ENCODE measurements at regions of chr3 and their contacts with region 1.

Region 1: GRCh38 chr3:48188266-48189201 is at the start of gene CDC25A:
- DNase-seq: peak; percentile 95
- H3K4me3 Mint-ChIP-seq: peak within 1 kb of the TSS; percentile 96
- H3K27ac Mint-ChIP-seq: peak within 1 kb of the TSS; percentile 92
- H3K4me1 Mint-ChIP-seq: peaks cover 35% of the 10 kb centered on the region
- H3K27me3 Mint-ChIP-seq: peaks cover 6% of the 10 kb centered on the region
- total RNA-seq, gene CDC25A: 50.9 and 52.6 TPM in 2 replicates

Region 2: DNA sequence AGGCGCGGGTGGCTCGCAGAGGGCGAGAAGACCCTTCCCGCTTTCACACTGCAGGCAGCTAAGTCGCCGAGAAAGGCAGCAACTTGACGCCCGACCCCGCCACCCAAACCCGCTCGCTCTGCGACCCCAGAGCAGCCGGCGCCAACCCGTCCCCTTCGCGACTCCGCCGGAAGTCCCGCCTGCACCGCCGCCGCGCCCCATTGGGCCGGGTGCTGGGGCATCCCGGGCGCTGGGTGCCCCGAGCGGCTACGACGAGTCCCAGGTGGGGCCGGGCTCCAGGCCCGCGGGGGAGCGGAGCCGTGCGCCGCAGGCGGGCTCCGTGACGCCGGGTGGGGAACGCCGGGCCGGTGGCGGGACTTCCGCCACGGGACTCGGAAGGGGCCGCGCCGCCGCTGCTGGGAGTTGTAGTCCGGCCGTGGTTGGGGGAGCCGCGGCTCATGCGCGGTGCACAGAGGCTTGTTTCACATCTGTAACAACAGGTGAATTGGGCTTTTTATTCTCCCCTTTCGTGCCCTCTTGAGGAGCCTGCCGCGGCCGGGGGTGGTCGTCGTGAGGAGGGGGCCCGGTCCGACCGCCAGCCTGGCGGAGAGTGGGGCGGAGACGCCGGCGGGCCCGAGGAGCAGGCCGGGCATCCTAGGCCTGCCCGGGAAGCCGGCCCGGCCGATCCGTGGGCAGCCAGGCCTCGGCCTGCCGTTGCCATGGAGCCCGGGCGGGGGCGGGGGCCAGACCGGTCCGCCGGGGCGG is 385.6 kb before region 1 on chr3 and contains the start of gene DHX30:
- intact Hi-C with region 1: loop called (anchors 1 kb)
- DNase-seq: peak; percentile 82
- H3K4me3 Mint-ChIP-seq: peak within 1 kb of the TSS; percentile 93
- H3K27ac Mint-ChIP-seq: peak within 1 kb of the TSS; percentile 95
- H3K4me1 Mint-ChIP-seq: peaks cover 19% of the 10 kb centered on the region
- H3K27me3 Mint-ChIP-seq: no peaks in the 10 kb centered on the region
- total RNA-seq, gene DHX30: 149 and 154 TPM in 2 replicates

Region 3: GRCh38 chr3:48112813-48113212 is 75.7 kb before region 1 on chr3:
- intact Hi-C with region 1: loop called (anchors 1 kb)
- DNase-seq: no peak
- H3K4me3 Mint-ChIP-seq: peak overlapping the region; percentile 38
- H3K27ac Mint-ChIP-seq: peak overlapping the region; percentile 76
- H3K4me1 Mint-ChIP-seq: peaks cover 17% of the 10 kb centered on the region
- H3K27me3 Mint-ChIP-seq: peaks cover 2% of the 10 kb centered on the region

Region 4: GRCh38 chr3:48268381-48269183 is 80.0 kb after region 1 on chr3:
- intact Hi-C with region 1: loop called (anchors 1 kb)
- DNase-seq: peak; percentile 74
- H3K4me3 Mint-ChIP-seq: peak overlapping the region; percentile 63
- H3K27ac Mint-ChIP-seq: peak overlapping the region; percentile 97
- H3K4me1 Mint-ChIP-seq: peaks cover 51% of the 10 kb centered on the region
- H3K27me3 Mint-ChIP-seq: no peaks in the 10 kb centered on the region

Region 5: DNA sequence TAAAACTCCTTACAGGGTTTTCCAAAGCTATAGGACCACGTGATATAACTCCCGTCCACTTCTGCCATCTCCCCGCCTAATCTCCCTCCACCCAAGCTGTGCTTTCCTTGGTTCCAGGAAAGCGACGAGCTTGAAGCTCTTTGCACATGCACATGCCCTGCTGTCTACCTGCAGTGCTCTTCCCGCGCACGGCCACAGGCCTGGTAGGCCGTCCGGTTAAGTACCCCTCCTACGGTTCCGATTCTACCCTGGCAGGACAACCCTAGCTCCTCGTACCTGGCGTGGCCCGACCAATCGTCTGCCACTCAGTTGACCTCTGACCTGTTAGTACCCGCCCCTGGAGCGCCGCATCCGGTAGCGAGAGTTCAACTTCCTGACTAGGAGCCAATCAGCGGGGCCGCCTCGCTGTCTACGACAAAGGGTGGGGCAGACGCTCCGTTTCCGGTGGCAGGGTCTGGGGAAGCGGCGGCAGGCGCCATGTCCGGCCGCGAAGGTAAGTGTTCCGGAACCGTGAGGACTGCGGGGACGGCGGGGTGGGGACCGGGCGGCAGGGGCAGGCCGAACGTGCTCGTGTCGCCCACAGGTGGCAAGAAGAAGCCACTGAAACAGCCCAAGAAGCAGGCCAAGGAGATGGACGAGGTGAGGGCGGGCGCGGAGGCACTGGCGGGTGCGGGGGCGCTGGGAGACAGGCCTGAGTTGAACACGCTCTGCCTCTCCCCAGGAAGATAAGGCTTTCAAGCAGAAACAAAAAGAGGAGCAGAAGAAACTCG is 251.5 kb after region 1 on chr3 and contains the starts of genes CCDC51 and TMA7:
- intact Hi-C with region 1: loop called (anchors 2 kb)
- DNase-seq: peak; percentile 98
- H3K4me3 Mint-ChIP-seq: peak within 1 kb of the TSS; percentile 98
- H3K27ac Mint-ChIP-seq: peak within 1 kb of the TSS; percentile 94
- H3K4me1 Mint-ChIP-seq: peaks cover 26% of the 10 kb centered on the region
- H3K27me3 Mint-ChIP-seq: no peaks in the 10 kb centered on the region
- total RNA-seq, gene CCDC51: 26.0 and 26.3 TPM in 2 replicates
- total RNA-seq, gene TMA7: 262 and 266 TPM in 2 replicates

Region 6: GRCh38 chr3:48716982-48717746 is 528.6 kb after region 1 on chr3 and contains the start of gene IP6K2:
- intact Hi-C with region 1: loop called (anchors 2 kb)
- DNase-seq: peak; percentile 98
- H3K4me3 Mint-ChIP-seq: peak within 1 kb of the TSS; percentile 98
- H3K27ac Mint-ChIP-seq: peak within 1 kb of the TSS; percentile 94
- H3K4me1 Mint-ChIP-seq: peaks cover 29% of the 10 kb centered on the region
- H3K27me3 Mint-ChIP-seq: peaks cover 17% of the 10 kb centered on the region
- total RNA-seq, gene IP6K2: 59.9 and 61.0 TPM in 2 replicates

Region 7: DNA sequence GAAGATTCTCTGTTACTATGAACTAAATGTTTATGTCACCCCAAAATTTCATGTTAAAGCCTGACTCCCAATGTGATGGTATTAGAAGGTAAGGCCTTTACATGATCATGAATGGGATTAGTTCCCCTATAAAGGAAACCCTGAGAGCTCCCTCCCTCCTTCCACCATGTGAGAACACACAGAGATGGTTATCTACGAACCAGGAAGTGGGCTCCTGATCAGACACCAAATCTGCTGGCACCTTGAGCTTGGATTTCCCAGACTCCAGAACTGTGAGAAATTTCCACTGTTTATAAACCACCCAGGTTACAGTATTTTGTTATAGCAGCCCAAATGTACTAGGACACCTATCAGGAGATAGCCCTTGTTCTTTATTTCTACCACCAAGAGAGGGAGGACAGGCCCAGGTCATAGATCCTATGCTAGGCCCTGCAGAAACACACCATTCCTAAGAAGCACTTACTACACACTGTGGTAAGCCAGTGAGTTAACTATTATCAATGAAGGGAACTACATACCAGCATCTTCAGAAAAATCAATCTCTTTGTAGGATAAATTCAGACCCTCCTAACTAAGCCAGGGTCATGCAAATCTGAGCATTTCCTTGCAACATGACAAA is 600.1 kb after region 1 on chr3:
- intact Hi-C with region 1: no loop called
- DNase-seq: no peak
- H3K4me3 Mint-ChIP-seq: no peak overlapping the region
- H3K27ac Mint-ChIP-seq: peak overlapping the region; percentile 38
- H3K4me1 Mint-ChIP-seq: peaks cover 16% of the 10 kb centered on the region
- H3K27me3 Mint-ChIP-seq: no peaks in the 10 kb centered on the region

Measured in activated T-helper 1 cell treated with anti-CD3 and anti-CD28 coated beads, Interleukin-12 subunit alpha, Interleukin-12 subunit beta, Interleukin-2, Interleukin-4 antibody, amounts not matched to agents 30 ng/mL and 10 ng/mL and 1 ng/mL, durations not matched to agents 14 hours and 24 hours and 36 hours (primary cell).